ENCODE measurements at regions of chr12 and their contacts with region 1.

Region 1: GRCh38 chr12:24778486-24779304 is 170.2 kb downstream of the BCAT1 start:
- DNase-seq: peak; percentile 34
- H3K4me3 ChIP-seq: no peak overlapping the region
- H3K27ac ChIP-seq: no peak overlapping the region
- H3K27me3 ChIP-seq: no peaks in the 10 kb centered on the region
- CTCF ChIP-seq: peak; percentile 66

Region 2: DNA sequence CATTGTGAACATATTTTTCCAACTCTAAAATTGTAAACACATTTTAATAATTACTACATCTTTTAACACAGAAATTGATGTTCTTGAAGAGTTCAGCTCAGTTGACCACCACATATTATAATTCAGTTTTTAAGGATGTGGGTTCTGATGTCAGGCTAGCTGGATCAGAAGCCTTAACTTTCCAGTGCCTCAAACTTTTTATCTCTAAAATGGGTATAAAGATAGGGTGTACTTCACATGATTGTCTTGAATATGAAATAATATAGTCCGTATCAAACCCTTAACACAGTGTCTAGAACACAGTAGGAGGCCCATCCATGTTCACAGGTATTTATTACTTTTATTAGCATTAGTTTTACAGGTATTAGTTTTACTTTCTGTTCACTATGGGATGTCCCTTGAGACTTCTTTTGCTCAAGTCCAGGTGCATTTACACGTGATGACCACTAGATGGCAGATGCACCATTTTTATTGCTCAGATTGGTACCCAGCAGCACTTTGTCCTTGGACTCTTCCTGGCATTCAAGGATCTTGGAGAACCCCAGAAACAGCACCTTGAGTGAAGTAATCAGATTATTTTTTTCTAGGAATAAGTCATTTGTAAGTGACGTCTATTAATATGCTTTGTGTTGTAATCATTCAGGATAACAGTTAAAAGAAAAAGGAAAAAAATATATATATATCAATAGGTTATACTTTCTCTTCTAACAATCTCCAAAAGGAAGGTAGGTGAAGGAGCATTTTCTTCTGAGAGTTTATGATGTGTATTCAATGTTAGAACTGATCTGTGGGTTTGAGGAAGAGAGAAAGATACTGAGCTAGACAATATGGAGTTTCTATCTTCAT is 1573.5 kb before region 1 on chr12:
- CTCF ChIA-PET with region 1: interaction called, 47 read pairs
- POLR2A ChIA-PET with region 1: no interaction called
- DNase-seq: peak; percentile 30
- H3K4me3 ChIP-seq: no peak overlapping the region
- H3K27ac ChIP-seq: no peak overlapping the region
- H3K27me3 ChIP-seq: peaks cover 7% of the 10 kb centered on the region
- CTCF ChIP-seq: peak; percentile 91

Measured in AG04450 (cell line).